ENCODE measurements at regions of chr6 and their contacts with region 1.

Region 1: GRCh38 chr6:129709769-129710449 is at the start of gene ARHGAP18:
- DNase-seq: peak; percentile 58 to 76 (median 68)
- H3K4me3 ChIP-seq: peak within 1 kb of the TSS; percentile 81 to 97
- H3K4me3 Mint-ChIP-seq: peak within 1 kb of the TSS; percentile 95 to 99 (median 98)
- H3K27ac ChIP-seq: peak within 1 kb of the TSS; percentile 65
- H3K27ac Mint-ChIP-seq: peak within 1 kb of the TSS; percentile 57 to 96 (median 94)
- H3K4me1 ChIP-seq: peaks cover 38% of the 10 kb centered on the region
- H3K4me1 Mint-ChIP-seq: peaks cover 29 to 45% (median 38%) of the 10 kb centered on the region in 4 donors
- H3K27me3 ChIP-seq: no peaks in the 10 kb centered on the region
- H3K27me3 Mint-ChIP-seq: peaks cover 0 to 2% of the 10 kb centered on the region in 2 donors
- total RNA-seq, gene ARHGAP18: 4.3 to 4.6 TPM

Region 2: GRCh38 chr6:129475477-129476247 is 234.2 kb before region 1 on chr6:
- CTCF ChIA-PET with region 1: no interaction called
- POLR2A ChIA-PET with region 1: no interaction called
- intact Hi-C with region 1: no loop called
- DNase-seq: no peak
- H3K4me3 ChIP-seq: no peak overlapping the region
- H3K4me3 Mint-ChIP-seq: no peak overlapping the region
- H3K27ac ChIP-seq: no peak overlapping the region
- H3K27ac Mint-ChIP-seq: no peak overlapping the region
- H3K4me1 ChIP-seq: no peaks in the 10 kb centered on the region
- H3K4me1 Mint-ChIP-seq: peaks cover 0 to 1% (median 0%) of the 10 kb centered on the region in 4 donors
- H3K27me3 ChIP-seq: no peaks in the 10 kb centered on the region
- H3K27me3 Mint-ChIP-seq: no peaks in the 10 kb centered on the region

Region 3: DNA sequence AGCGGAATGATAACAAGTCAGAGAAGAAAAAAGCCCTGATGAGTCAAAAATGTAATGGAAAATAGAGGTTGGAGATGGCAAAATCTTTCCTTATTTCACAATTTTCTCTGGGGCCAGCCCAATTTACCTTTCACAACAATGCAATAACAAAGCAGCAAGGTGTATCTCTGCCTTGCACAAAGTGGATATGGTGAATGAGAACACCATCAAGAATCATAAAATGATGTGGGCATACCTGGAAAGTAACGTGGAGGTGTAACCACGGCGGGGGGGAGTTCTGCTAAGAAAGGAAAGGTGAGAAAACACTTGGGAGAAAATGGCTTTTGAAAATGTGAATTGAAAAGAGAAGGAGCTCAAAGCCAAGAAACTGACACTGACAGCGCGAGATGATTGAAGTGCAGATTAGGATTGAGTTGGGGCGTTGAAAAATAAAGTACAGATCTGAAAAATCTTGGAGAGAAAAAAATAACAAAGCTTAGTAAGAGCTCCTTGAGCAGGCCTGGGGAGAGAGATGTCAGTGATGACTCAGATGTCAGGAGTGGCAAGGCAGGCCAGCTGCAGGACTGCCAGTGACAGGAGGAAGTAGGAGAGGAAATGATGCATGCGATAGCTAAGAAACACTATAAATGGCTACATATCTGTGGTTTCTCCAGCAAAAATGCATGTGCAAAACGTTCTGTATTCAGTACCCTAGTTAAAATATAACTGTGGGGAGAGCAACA is 26.1 kb before region 1 on chr6:
- CTCF ChIA-PET with region 1: interaction called, 11 read pairs
- POLR2A ChIA-PET with region 1: interaction called, 17 read pairs
- intact Hi-C with region 1: loop called (anchors 2 kb)
- DNase-seq: peak; percentile 55 to 86 (median 64)
- H3K4me3 ChIP-seq: no peak overlapping the region
- H3K4me3 Mint-ChIP-seq: peak overlapping the region in 7 of 8 donors; percentile 30 to 75 (median 52)
- H3K27ac ChIP-seq: peak overlapping the region; percentile 43
- H3K27ac Mint-ChIP-seq: peak overlapping the region; percentile 70 to 91 (median 90)
- H3K4me1 ChIP-seq: peaks cover 65% of the 10 kb centered on the region
- H3K4me1 Mint-ChIP-seq: peaks cover 37 to 51% (median 44%) of the 10 kb centered on the region in 4 donors
- H3K27me3 ChIP-seq: no peaks in the 10 kb centered on the region
- H3K27me3 Mint-ChIP-seq: no peaks in the 10 kb centered on the region